ENCODE measurements at regions of chr16 and their contacts with region 1.

Region 1: GRCh38 chr16:10918294-10919002 is 23.8 kb downstream of the DEXI start:
- DNase-seq: peak; percentile 90 to 94
- ATAC-seq: peak; percentile 54 to 66 (median 60)
- H3K4me3 ChIP-seq: peak overlapping the region; percentile 9
- H3K27ac ChIP-seq: peak overlapping the region; percentile 91
- H3K4me1 ChIP-seq: peaks cover 35% of the 10 kb centered on the region
- H3K27me3 ChIP-seq: no peaks in the 10 kb centered on the region
- CTCF ChIP-seq: peak; percentile 98

Region 2: GRCh38 chr16:10256784-10257641 is 661.4 kb before region 1 on chr16:
- intact Hi-C with region 1: loop called in 1 of 2 experiments (anchors 5 kb)
- DNase-seq: peak in 1 of 2 donors; percentile 26
- ATAC-seq: peak in 2 of 4 donors; percentile 57 to 65
- H3K4me3 ChIP-seq: no peak overlapping the region
- H3K27ac ChIP-seq: no peak overlapping the region
- H3K4me1 ChIP-seq: no peaks in the 10 kb centered on the region
- H3K27me3 ChIP-seq: no peaks in the 10 kb centered on the region
- CTCF ChIP-seq: peak; percentile 57

Region 3: DNA sequence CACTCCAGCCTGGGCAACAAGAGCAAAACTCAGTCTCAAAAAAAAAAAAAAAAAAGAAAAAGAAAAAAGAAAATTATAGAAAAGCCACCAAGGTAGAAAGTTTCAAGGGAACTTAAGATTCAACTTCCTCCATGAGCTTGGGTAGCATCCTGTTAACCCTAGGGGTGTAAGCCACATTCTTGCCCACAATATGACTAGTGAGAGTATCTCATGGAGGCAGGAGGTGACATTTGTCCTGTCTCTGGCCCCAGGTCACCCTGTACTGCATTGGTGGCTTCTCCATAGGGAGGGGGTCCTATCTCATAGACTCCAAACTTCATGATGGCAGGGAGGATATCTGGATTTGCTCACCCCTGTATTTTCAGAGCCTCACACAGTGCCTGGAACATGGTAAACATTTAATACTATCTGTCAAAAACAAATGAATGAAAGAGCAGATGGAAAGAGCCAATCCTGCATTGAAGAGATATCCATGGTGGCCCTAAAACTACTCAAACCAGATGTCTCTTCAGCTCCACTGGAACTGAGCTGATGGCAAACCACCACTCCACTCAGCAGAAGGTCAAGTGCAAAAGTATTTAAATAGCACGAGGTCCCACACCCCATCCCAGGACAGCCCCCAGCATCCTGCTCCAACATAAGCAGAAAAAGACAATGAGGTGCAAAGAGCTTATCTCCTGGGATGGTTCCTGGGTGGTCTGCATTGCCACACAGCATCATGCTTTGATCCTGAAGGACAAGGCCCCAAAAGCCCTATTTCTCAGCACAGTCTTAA is 388.4 kb before region 1 on chr16:
- intact Hi-C with region 1: loop called in 1 of 2 experiments (anchors 5 kb)
- DNase-seq: no peak
- ATAC-seq: no peak
- H3K4me3 ChIP-seq: no peak overlapping the region
- H3K27ac ChIP-seq: peak overlapping the region; percentile 41
- H3K4me1 ChIP-seq: peaks cover 19% of the 10 kb centered on the region
- H3K27me3 ChIP-seq: no peaks in the 10 kb centered on the region
- CTCF ChIP-seq: no peak

Region 4: GRCh38 chr16:10743610-10744393 is 174.6 kb before region 1 on chr16 and contains the start of gene NUBP1:
- intact Hi-C with region 1: loop called (anchors 2 to 10 kb)
- DNase-seq: peak; percentile 99
- ATAC-seq: peak; percentile 97 to 98 (median 98)
- H3K4me3 ChIP-seq: peak within 1 kb of the TSS; percentile 58
- H3K27ac ChIP-seq: peak within 1 kb of the TSS; percentile 86
- H3K4me1 ChIP-seq: peaks cover 23% of the 10 kb centered on the region
- H3K27me3 ChIP-seq: no peaks in the 10 kb centered on the region
- CTCF ChIP-seq: no peak
- total RNA-seq, gene NUBP1: 24.7 to 38.1 (median 29.0) TPM

Region 5: GRCh38 chr16:10835281-10835931 is 83.0 kb before region 1 on chr16:
- intact Hi-C with region 1: loop called in 1 of 2 experiments (anchors 10 kb)
- DNase-seq: no peak
- ATAC-seq: no peak
- H3K4me3 ChIP-seq: no peak overlapping the region
- H3K27ac ChIP-seq: no peak overlapping the region
- H3K4me1 ChIP-seq: no peaks in the 10 kb centered on the region
- H3K27me3 ChIP-seq: no peaks in the 10 kb centered on the region
- CTCF ChIP-seq: no peak

Measured in psoas muscle (tissue), 8 donors.